PC-3 (cell line): ENCODE measurements at regions of chr18 and their contacts with region 1.

Region 1: DNA sequence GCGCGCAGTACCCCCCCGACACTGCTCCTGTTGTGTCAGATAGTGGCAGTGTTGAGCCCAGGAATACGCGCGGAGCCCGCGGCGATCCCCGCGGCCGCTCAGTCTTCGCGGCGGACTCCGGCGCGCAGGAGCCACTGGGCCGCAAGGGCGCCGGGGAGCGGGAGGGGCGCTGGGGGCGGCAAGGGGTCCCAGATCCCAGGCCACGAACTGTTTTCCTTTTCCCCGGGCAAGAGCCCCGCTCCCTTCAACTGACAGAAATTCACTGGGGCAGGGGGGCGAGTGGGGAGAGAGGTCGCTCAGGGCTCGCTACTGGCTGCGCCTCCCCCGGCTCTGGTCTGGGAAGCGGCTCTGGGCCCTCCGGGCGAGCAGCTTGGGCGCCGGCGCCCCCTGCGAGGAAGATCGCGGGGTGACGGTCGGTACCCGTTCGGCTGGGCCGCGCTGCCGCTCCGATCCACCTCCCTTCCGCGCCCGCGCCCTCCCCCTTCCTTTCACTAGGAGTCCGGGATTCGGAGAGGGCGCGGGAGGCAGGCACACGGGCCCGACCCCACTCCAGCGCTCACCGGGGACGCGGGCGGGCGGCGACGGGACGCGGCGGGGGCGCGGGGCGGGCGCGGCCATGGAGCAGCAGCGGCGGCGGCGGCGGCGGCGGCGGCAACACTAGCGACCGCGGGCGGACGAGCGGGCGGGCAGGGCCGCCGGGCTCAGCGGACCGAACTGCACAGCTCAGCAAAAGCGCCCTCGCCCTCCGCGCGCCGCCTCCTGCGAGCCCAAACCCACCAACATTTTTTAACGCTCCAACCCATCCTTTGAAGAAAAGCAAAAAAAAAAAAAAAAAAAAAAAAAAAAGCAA is 1.4 kb upstream of the SETBP1 start:
- DNase-seq: peak; percentile 67
- ATAC-seq: peak; percentile 80
- H3K4me3 ChIP-seq: peak overlapping the region; percentile 73
- H3K27ac ChIP-seq: peak overlapping the region; percentile 43
- H3K4me1 ChIP-seq: peaks cover 11% of the 10 kb centered on the region; the same call in 1 of the 2 replicates
- H3K27me3 ChIP-seq: no peaks in the 10 kb centered on the region
- CTCF ChIP-seq: peak; percentile 43; the same call in 1 of the 2 replicates

Region 2: GRCh38 chr18:43571078-43571689 is 1108.1 kb before region 1 on chr18:
- CTCF ChIA-PET with region 1: no interaction called
- POLR2A ChIA-PET with region 1: no interaction called
- intact Hi-C with region 1: no loop called
- DNase-seq: peak; percentile 59
- ATAC-seq: no peak
- H3K4me3 ChIP-seq: no peak overlapping the region
- H3K27ac ChIP-seq: no peak overlapping the region
- H3K4me1 ChIP-seq: no peaks in the 10 kb centered on the region
- H3K27me3 ChIP-seq: no peaks in the 10 kb centered on the region
- CTCF ChIP-seq: peak; percentile 65

Region 3: GRCh38 chr18:44452346-44452745 is 226.9 kb before region 1 on chr18:
- CTCF ChIA-PET with region 1: no interaction called
- POLR2A ChIA-PET with region 1: no interaction called
- intact Hi-C with region 1: loop called (anchors 10 kb)
- DNase-seq: no peak
- ATAC-seq: no peak
- H3K4me3 ChIP-seq: no peak overlapping the region
- H3K27ac ChIP-seq: no peak overlapping the region
- H3K4me1 ChIP-seq: no peaks in the 10 kb centered on the region
- H3K27me3 ChIP-seq: no peaks in the 10 kb centered on the region
- CTCF ChIP-seq: no peak

Region 4: DNA sequence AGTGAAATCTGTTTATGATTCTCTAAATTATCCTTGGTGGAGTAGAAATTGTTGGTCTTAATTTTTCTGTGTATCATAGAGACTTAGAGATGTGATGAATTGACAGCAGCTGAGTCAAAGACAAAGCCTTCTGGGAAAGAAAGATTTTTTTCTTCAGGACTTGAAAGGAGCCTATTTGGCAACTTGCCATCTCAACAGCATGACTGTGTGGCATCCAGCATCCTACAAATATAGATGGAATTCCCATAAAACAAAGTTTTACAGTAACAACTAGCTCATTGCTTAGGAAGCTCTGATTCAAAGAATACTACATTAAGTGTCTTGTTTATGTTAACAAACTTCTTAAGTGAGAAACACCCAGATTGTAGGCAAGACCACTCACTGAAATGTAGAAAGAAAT is 77.8 kb before region 1 on chr18:
- CTCF ChIA-PET with region 1: interaction called, 3 read pairs
- POLR2A ChIA-PET with region 1: no interaction called
- intact Hi-C with region 1: loop called (anchors 5 kb)
- DNase-seq: peak; percentile 78
- ATAC-seq: peak; percentile 62
- H3K4me3 ChIP-seq: no peak overlapping the region
- H3K27ac ChIP-seq: peak overlapping the region; percentile 92
- H3K4me1 ChIP-seq: peaks cover 34% of the 10 kb centered on the region
- H3K27me3 ChIP-seq: no peaks in the 10 kb centered on the region
- CTCF ChIP-seq: no peak

Region 5: DNA sequence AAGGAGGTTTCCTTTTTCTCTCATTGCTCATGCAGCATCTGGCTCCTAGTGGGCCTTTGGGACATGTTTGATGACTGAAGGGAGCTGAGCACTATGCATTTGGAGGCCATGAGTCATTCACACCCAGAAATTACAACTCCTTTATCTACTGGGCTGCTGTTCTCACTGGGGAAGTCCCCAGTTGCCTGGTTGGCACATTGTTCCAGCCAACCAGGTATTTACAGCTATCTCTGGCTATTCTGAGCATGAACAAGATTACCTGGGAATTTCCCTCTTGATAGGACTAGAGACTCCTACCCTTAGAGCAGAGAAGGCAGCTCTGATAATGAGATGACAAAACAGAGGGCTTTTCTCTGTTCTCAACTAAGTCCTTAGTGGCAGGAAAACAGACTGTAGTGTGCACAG is 207.9 kb after region 1 on chr18:
- CTCF ChIA-PET with region 1: no interaction called
- POLR2A ChIA-PET with region 1: interaction called, 14 read pairs
- intact Hi-C with region 1: no loop called
- DNase-seq: no peak
- ATAC-seq: no peak
- H3K4me3 ChIP-seq: no peak overlapping the region
- H3K27ac ChIP-seq: no peak overlapping the region
- H3K4me1 ChIP-seq: no peaks in the 10 kb centered on the region
- H3K27me3 ChIP-seq: no peaks in the 10 kb centered on the region
- CTCF ChIP-seq: no peak

Region 6: DNA sequence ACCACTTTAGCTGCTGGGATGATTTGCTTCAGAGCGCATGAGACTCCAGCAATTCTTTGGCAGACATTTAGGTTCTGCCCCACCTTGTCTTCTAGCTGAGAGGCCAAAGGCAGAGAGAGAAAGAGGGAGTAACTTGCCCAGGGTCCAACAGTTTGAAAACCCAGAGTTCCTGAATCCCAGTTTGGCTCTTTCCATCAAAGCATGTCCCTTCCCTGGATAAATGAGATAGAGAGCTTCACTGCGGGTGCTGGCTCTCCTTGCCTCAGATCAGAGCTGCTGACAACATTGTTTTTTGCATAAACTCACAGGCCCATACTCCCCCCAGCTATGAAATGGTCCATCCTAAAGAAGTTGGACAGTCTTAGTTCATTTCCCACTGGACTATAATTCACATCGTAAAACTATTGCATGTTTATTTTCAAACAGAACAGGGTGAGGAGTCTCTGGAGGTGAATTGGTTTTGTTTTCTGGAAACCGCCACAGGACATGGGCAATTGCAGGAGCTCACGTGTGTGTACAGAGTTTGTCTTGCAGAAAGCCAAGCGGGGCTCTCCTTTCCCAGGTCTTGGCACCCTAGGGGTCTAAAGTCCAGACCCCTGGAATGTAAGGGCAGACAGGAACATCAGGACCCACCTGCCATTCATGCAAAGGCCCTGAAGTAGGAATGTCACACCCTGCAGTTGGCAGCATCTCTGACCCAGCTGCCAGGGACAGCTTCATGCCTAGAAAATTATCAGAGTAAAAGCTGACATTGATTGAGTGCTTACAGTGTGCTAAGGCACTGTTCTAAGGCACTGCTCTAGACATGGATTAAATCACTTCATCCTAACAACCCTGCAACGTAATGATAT is 911.0 kb after region 1 on chr18:
- CTCF ChIA-PET with region 1: no interaction called
- POLR2A ChIA-PET with region 1: interaction called, 15 read pairs
- intact Hi-C with region 1: no loop called
- DNase-seq: peak; percentile 1
- ATAC-seq: peak; percentile 53
- H3K4me3 ChIP-seq: no peak overlapping the region
- H3K27ac ChIP-seq: peak overlapping the region; percentile 67
- H3K4me1 ChIP-seq: peaks cover 22% of the 10 kb centered on the region
- H3K27me3 ChIP-seq: no peaks in the 10 kb centered on the region
- CTCF ChIP-seq: no peak